Heart left ventricle (tissue), 16 donors: ENCODE measurements at regions of chr20 and their contacts with region 1.

Region 1: DNA sequence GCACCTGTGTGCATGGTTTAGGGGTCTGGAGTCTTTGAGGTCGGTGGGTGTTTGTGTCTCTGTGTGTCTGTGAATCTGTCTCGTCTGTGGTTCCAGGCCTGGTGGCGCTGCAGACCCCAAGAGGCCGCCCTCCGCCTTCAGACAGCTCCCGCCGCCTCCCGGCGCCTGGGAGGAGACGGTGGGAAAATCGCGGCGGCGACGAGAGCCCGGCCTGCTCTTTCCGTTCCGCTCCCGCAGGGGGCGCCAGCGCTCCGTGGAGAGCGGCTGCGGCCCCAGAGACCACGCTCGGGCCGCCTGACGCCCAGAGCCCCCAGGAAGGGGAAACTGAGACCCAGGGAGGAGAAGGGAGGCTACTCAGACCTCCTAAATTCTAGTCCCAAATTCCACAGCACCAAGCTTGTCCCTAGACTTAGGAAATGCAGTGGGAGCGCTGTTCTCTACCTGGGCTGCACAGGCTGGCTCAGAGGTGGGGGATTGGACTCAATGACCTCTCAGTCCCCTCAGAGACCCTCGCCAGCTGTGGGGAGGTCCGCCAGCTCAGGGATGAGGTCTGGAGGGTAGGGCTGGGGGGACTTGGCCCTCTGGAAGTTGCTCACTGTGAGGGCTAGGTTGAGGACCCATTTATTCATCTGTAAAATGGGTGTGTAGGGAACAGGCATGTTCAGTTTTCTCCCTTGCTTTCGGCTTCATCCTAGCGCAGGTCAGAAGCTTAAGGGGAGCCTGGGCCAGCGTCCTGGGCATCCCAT is 36.9 kb upstream of the BLCAP start:
- DNase-seq: peak in 4 of 5 donors; percentile 24 to 69 (median 35)
- ATAC-seq: peak in 3 of 4 donors; percentile 65 to 80 (median 71)
- H3K4me3 ChIP-seq: no peak overlapping the region
- H3K27ac ChIP-seq: no peak overlapping the region
- H3K4me1 ChIP-seq: peaks cover 0 to 8% (median 2%) of the 10 kb centered on the region in 12 donors
- H3K27me3 ChIP-seq: peaks cover 3 to 61% (median 35%) of the 10 kb centered on the region in 9 donors
- CTCF ChIP-seq: peak; percentile 80 to 95 (median 92)
- POLR2A ChIP-seq: no peak

Region 2: DNA sequence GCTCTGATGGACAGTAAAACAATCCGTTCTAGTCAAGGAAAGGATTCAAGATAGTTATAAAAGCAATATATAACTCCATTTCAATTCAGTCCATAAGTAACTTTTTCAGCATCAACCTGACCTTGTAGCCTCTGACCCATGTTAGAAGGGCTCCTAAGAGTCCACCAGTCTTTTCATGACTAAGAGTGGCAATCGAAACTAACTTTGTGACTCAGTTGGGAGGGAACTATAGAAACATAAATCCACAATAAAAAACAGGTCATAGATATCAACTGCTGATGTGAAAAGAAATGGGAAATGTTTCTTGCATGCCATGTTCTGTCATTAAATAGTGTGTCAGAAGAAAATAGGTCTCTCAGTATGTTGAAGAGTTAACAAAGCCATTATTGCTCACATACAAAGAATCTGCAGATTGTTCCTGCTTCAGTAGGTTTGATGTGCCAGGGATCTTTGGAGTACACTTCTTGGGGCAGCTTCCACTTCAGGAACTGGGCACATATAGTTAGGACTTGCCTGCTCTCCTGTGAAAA is 452.6 kb before region 1 on chr20:
- intact Hi-C with region 1: no loop called
- DNase-seq: no peak
- ATAC-seq: no peak
- H3K4me3 ChIP-seq: no peak overlapping the region
- H3K27ac ChIP-seq: no peak overlapping the region
- H3K4me1 ChIP-seq: no peaks in the 10 kb centered on the region
- H3K27me3 ChIP-seq: no peaks in the 10 kb centered on the region
- CTCF ChIP-seq: no peak
- POLR2A ChIP-seq: no peak

Region 3: GRCh38 chr20:37990571-37991151 is 426.1 kb after region 1 on chr20:
- intact Hi-C with region 1: loop called in 9 of 10 experiments (anchors 2 to 10 kb)
- DNase-seq: peak; percentile 52 to 92 (median 76)
- ATAC-seq: peak; percentile 66 to 75 (median 74)
- H3K4me3 ChIP-seq: no peak overlapping the region
- H3K27ac ChIP-seq: peak overlapping the region; percentile 68 to 93 (median 83)
- H3K4me1 ChIP-seq: peaks cover 7 to 89% (median 53%) of the 10 kb centered on the region in 12 donors
- H3K27me3 ChIP-seq: no peaks in the 10 kb centered on the region
- CTCF ChIP-seq: no peak
- POLR2A ChIP-seq: no peak

Region 4: GRCh38 chr20:38033310-38034107 is 468.9 kb after region 1 on chr20 and contains the starts of genes RPRD1B and TTI1:
- intact Hi-C with region 1: loop called in 1 of 10 experiments (anchors 10 kb)
- DNase-seq: peak; percentile 91 to 94 (median 93)
- ATAC-seq: peak; percentile 96 to 98 (median 98)
- H3K4me3 ChIP-seq: peak within 1 kb of the TSS; percentile 42 to 98 (median 84)
- H3K27ac ChIP-seq: peak within 1 kb of the TSS; percentile 88 to 100 (median 95)
- H3K4me1 ChIP-seq: peaks cover 6 to 61% (median 47%) of the 10 kb centered on the region in 12 donors
- H3K27me3 ChIP-seq: no peaks in the 10 kb centered on the region
- CTCF ChIP-seq: peak in 2 of 12 donors; percentile 29 to 34
- POLR2A ChIP-seq: peak in 1 of 2 donors; percentile 70
- total RNA-seq, gene RPRD1B: 32.5 to 60.2 (median 43.1) TPM
- total RNA-seq, gene TTI1: 9.7 to 13.3 (median 11.0) TPM

Region 5: GRCh38 chr20:38229376-38230252 is 665.1 kb after region 1 on chr20:
- intact Hi-C with region 1: loop called in 6 of 10 experiments (anchors 5 to 10 kb)
- DNase-seq: peak in 1 of 5 donors; percentile 17
- ATAC-seq: peak in 1 of 4 donors; percentile 15
- H3K4me3 ChIP-seq: no peak overlapping the region
- H3K27ac ChIP-seq: no peak overlapping the region
- H3K4me1 ChIP-seq: peaks cover 0 to 15% (median 0%) of the 10 kb centered on the region in 12 donors
- H3K27me3 ChIP-seq: no peaks in the 10 kb centered on the region
- CTCF ChIP-seq: peak; percentile 27 to 60 (median 49)
- POLR2A ChIP-seq: no peak

Region 6: DNA sequence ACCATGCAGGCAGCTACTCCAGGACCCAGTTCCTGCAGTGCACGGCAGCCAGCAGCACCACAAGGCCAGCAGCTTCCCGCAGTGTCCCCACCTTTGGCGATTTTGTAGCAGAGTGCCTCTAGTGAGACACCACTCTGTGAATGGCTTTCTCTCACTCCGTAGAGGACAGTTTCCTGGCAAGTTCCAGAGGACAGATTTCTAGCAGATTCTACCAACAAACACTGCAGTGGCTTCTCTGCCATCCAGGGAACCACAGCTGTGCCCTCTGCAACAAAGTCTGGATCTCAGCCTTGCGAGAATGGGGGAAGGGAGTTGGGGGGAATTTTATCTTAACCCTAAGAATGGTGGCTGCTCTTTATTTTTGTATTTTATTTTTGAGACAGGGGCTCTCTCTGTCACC is 841.9 kb after region 1 on chr20:
- intact Hi-C with region 1: loop called in 1 of 10 experiments (anchors 5 kb)
- DNase-seq: no peak
- ATAC-seq: no peak
- H3K4me3 ChIP-seq: no peak overlapping the region
- H3K27ac ChIP-seq: no peak overlapping the region
- H3K4me1 ChIP-seq: peaks cover 0 to 2% (median 0%) of the 10 kb centered on the region in 12 donors
- H3K27me3 ChIP-seq: no peaks in the 10 kb centered on the region
- CTCF ChIP-seq: no peak
- POLR2A ChIP-seq: no peak

Region 7: GRCh38 chr20:38573413-38573812 is 1008.9 kb after region 1 on chr20:
- intact Hi-C with region 1: no loop called
- DNase-seq: no peak
- ATAC-seq: peak in 3 of 4 donors; percentile 24 to 44 (median 42)
- H3K4me3 ChIP-seq: no peak overlapping the region
- H3K27ac ChIP-seq: no peak overlapping the region
- H3K4me1 ChIP-seq: peaks cover 0 to 4% (median 0%) of the 10 kb centered on the region in 12 donors
- H3K27me3 ChIP-seq: no peaks in the 10 kb centered on the region
- CTCF ChIP-seq: no peak
- POLR2A ChIP-seq: no peak